Activated CD8-positive, alpha-beta memory T cell treated with anti-CD3 and anti-CD28 coated beads, Interleukin-2, amount 10 ng/mL, durations not matched to agents 7 days and 5 days (primary cell): ENCODE measurements at regions of chr10 and their contacts with region 1.

Region 1: DNA sequence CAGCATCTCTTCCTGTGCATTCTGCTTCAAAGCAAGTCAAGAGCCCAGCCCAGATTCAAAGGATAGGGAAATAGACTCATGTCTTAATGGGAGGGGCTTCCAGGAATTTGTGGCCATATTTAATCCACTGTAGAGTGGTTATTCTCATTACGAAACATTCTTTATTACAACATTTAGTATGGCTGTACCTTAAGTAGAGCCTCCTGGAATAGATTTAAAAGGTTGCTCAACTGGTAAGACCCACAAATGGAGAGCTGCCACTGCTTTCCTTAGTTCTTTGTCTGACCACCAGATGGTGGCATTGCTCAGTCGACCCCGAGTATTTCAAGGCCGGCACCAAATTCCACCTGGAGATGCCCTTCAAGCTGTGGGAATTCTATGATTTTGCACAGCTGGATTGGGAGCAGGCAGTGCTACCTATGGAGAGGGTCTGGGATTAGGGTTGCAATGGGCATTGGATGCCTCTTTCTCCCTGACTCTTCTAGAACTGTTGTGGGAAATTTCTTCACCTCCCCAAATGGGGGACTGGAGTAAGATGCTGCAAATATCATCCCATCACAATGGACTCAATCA is 102.2 kb downstream of the RBM20 start:
- DNase-seq: peak; percentile 56
- ATAC-seq: peak; percentile 57
- H3K4me3 Mint-ChIP-seq: no peak overlapping the region
- H3K27ac Mint-ChIP-seq: no peak overlapping the region
- H3K4me1 Mint-ChIP-seq: peaks cover 41% of the 10 kb centered on the region
- H3K27me3 Mint-ChIP-seq: no peaks in the 10 kb centered on the region

Region 2: GRCh38 chr10:110643653-110644597 is 102.4 kb before region 1 on chr10 and contains the start of gene RBM20:
- CTCF ChIA-PET with region 1: no interaction called
- DNase-seq: no peak
- ATAC-seq: peak; percentile 71
- H3K4me3 Mint-ChIP-seq: peak within 1 kb of the TSS; percentile 70
- H3K27ac Mint-ChIP-seq: peak within 1 kb of the TSS; percentile 18
- H3K4me1 Mint-ChIP-seq: peaks cover 19% of the 10 kb centered on the region
- H3K27me3 Mint-ChIP-seq: peaks cover 75% of the 10 kb centered on the region
- total RNA-seq, gene RBM20: 0.06 to 0.07 TPM

Region 3: DNA sequence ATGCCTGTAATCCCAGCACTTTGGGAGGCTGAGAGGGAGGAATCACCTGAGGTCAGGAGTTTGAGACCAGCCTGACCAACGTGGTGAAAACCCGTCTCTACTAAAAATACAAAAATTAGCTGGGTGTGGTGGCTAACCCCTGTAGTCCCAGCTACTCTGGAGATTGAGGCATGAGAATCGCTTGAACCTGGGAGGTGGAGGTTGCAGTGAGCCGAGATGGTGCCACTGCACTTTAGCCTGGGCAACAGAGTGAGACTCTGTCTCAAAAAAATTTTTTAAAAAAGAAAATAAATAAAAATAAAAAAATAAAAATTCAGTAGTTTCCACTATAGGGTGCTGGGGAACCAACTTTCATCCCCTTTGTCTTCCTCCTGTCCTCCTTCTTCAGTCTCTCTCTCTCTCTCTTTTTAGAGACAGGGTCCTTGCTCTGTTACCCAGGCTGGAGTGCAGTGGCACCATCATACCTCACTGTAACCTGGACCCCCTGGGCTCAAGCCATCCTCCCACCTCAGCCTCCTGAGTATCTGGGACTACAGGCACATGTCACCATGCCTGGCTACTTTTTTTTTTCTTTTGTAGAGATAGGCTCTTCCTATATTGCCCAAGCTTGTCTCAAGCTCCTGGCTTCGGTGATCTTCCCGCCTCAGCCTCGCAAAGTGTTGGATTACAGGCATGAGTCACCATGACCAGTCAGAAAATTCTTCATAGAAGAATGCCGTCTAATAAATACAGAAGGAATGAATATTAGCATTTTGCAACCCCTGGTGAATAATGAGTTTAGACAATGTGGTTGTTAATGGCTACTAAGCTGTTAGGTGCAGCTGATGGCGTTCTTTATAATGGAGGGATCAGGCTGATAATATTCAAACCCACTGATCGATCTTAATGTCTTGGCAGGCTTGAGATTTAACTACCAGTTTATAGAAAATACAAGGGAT is 81.6 kb before region 1 on chr10:
- CTCF ChIA-PET with region 1: no interaction called
- DNase-seq: no peak
- ATAC-seq: no peak
- H3K4me3 Mint-ChIP-seq: no peak overlapping the region
- H3K27ac Mint-ChIP-seq: no peak overlapping the region
- H3K4me1 Mint-ChIP-seq: peaks cover 18% of the 10 kb centered on the region
- H3K27me3 Mint-ChIP-seq: peaks cover 45% of the 10 kb centered on the region

Region 4: DNA sequence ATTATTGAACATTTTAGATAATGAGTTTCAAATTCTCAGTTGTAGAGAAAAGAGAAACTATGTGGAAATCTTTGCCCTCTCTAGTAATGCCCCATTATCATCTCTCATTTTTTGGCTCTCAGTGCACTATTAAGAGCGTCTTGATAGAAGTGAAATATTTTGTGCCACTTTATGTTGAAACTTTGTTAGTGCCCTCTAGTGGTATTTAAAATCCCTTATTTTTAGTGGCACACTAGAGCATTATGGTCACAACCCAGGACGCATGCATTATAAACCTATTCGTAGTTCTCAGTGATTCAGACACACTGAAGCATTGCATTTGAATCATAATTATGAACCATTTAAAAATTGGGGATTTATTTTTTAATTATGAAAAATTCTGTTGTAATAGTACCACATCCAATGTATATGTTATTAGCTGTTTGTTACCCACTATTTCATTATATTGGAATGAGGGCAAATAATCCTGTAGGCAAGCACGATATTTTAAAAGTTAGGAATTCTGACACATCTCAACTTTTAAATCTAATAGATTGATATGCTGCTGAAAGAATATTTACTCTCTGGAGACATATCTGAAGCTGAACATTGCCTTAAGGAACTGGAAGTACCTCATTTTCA is 147.3 kb after region 1 on chr10:
- CTCF ChIA-PET with region 1: interaction called, 19 read pairs
- DNase-seq: no peak
- ATAC-seq: peak; percentile 85
- H3K4me3 Mint-ChIP-seq: no peak overlapping the region
- H3K27ac Mint-ChIP-seq: no peak overlapping the region
- H3K4me1 Mint-ChIP-seq: peaks cover 14% of the 10 kb centered on the region
- H3K27me3 Mint-ChIP-seq: no peaks in the 10 kb centered on the region

Region 5: GRCh38 chr10:110901954-110902819 is 155.8 kb after region 1 on chr10:
- CTCF ChIA-PET with region 1: interaction called, 19 read pairs
- DNase-seq: no peak
- ATAC-seq: peak; percentile 45
- H3K4me3 Mint-ChIP-seq: no peak overlapping the region
- H3K27ac Mint-ChIP-seq: no peak overlapping the region
- H3K4me1 Mint-ChIP-seq: peaks cover 26% of the 10 kb centered on the region
- H3K27me3 Mint-ChIP-seq: no peaks in the 10 kb centered on the region

Region 6: GRCh38 chr10:110912374-110912773 is 166.0 kb after region 1 on chr10:
- CTCF ChIA-PET with region 1: no interaction called
- DNase-seq: no peak
- ATAC-seq: no peak
- H3K4me3 Mint-ChIP-seq: no peak overlapping the region
- H3K27ac Mint-ChIP-seq: no peak overlapping the region
- H3K4me1 Mint-ChIP-seq: peaks cover 12% of the 10 kb centered on the region
- H3K27me3 Mint-ChIP-seq: no peaks in the 10 kb centered on the region

Region 7: GRCh38 chr10:111146025-111146640 is 399.8 kb after region 1 on chr10:
- CTCF ChIA-PET with region 1: no interaction called
- DNase-seq: no peak
- ATAC-seq: no peak
- H3K4me3 Mint-ChIP-seq: no peak overlapping the region
- H3K27ac Mint-ChIP-seq: no peak overlapping the region
- H3K4me1 Mint-ChIP-seq: peaks cover 11% of the 10 kb centered on the region
- H3K27me3 Mint-ChIP-seq: peaks cover 17% of the 10 kb centered on the region